ENCODE measurements at regions of chr4 and their contacts with region 1.

Region 1: GRCh38 chr4:54581807-54582206 is 76.0 kb upstream of the KIT start:
- DNase-seq: no peak
- H3K4me3 ChIP-seq: no peak overlapping the region
- H3K27ac ChIP-seq: no peak overlapping the region
- H3K4me1 ChIP-seq: peaks cover under 1 to 12% (median 6%) of the 10 kb centered on the region in 4 donors
- H3K27me3 ChIP-seq: no peaks in the 10 kb centered on the region
- CTCF ChIP-seq: no peak
- EP300 ChIP-seq: no peak
- POLR2A ChIP-seq: no peak

Region 2: GRCh38 chr4:54607067-54607466 is 25.3 kb after region 1 on chr4:
- in situ Hi-C with region 1: no loop called
- intact Hi-C with region 1: no loop called
- DNase-seq: no peak
- H3K4me3 ChIP-seq: no peak overlapping the region
- H3K27ac ChIP-seq: no peak overlapping the region
- H3K4me1 ChIP-seq: peaks cover 0 to 8% (median 3%) of the 10 kb centered on the region in 4 donors
- H3K27me3 ChIP-seq: no peaks in the 10 kb centered on the region
- CTCF ChIP-seq: no peak
- EP300 ChIP-seq: no peak
- POLR2A ChIP-seq: no peak

Region 3: DNA sequence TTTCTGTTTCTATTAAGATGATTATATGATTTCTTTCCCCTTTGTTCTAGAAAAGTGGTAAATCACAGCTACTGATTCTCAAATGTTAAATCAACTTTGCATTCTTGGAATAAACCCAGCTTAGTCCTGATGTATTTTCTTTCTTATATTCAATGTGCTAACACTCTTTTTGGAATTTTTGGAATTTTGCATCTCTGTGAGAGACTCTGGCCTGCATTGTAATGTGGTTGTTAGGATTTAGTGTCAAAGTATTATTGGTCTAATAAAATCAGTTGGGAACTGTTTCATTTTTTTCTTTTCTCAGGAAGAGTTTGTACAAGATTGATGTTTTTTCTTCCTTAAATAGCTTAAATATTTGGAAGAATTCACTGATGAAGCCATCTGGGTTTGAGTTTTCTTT is 185.6 kb after region 1 on chr4:
- in situ Hi-C with region 1: no loop called
- intact Hi-C with region 1: no loop called
- DNase-seq: no peak
- H3K4me3 ChIP-seq: no peak overlapping the region
- H3K27ac ChIP-seq: no peak overlapping the region
- H3K4me1 ChIP-seq: no peaks in the 10 kb centered on the region
- H3K27me3 ChIP-seq: no peaks in the 10 kb centered on the region
- CTCF ChIP-seq: no peak
- EP300 ChIP-seq: no peak
- POLR2A ChIP-seq: no peak

Region 4: DNA sequence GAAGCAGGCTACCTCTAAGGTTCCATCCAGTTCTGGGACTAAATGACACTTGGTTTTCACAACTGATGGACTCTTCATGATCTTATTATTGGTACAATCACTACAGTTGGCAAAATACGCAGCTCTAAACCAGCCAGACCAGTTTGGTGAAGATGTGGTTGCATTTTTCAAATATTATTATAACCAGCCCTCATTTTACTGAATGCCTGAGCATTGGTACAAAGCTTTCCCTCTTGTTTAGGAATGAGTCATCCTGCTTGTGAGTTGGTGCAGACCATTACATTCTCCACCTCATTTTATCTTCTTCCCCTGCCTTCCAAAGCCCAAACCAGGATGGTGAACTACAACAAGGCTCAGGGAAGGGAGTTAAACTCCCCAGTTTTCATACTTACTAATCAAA is 320.5 kb after region 1 on chr4:
- in situ Hi-C with region 1: no loop called
- intact Hi-C with region 1: loop called (anchors 5 kb)
- DNase-seq: no peak
- H3K4me3 ChIP-seq: no peak overlapping the region
- H3K27ac ChIP-seq: no peak overlapping the region
- H3K4me1 ChIP-seq: no peaks in the 10 kb centered on the region
- H3K27me3 ChIP-seq: no peaks in the 10 kb centered on the region
- CTCF ChIP-seq: no peak
- EP300 ChIP-seq: no peak
- POLR2A ChIP-seq: no peak

Region 5: GRCh38 chr4:55336136-55337034 is 754.6 kb after region 1 on chr4:
- in situ Hi-C with region 1: no loop called
- intact Hi-C with region 1: no loop called
- DNase-seq: no peak
- H3K4me3 ChIP-seq: no peak overlapping the region
- H3K27ac ChIP-seq: no peak overlapping the region
- H3K4me1 ChIP-seq: peaks cover 0 to 3% (median 0%) of the 10 kb centered on the region in 4 donors
- H3K27me3 ChIP-seq: no peaks in the 10 kb centered on the region
- CTCF ChIP-seq: no peak
- EP300 ChIP-seq: no peak
- POLR2A ChIP-seq: no peak

Measured in transverse colon (tissue), 4 donors.